Colonic mucosa (tissue), 4 donors: ENCODE measurements at regions of chr2 and their contacts with region 1.

Region 1: DNA sequence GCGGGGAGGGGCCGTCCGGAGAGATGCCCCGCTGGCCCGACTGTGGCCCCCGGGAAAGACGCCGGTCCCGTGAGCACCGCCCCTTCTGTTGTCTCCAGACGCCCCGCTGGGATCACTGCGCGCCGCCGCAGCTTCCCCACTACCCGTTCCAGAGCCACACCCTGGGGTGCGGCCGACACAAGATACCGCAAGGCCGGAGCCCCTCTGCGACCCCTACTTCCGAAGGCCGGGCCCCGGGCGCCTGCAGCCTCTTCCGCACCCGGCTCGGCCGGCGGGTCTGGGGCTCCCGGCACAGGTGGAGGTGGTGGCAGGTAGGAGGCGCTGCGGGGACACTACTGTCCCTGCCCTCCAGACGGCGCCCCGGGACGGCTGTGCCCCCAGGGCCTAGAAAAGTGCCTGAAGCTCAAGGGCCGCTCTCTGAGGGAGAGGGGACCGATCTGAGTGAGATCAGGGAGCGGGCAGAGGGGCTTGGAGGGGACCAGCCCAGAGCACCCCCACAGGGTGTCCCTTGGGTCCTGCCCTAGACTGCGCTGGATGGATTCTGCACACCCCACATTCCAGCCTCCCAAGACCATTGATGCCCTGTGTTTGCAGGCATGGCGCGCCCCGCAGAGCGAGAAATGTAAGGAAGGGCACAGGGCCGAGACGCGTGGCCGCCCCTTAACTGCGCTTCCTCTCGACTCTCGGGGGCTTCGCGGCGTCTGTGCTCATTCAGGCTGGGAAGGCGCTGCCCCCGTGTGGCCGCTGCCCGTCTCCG is 80.0 kb downstream of the GFPT1 start:
- DNase-seq: peak; percentile 86
- H3K4me3 ChIP-seq: peak overlapping the region; percentile 63
- H3K27ac ChIP-seq: peak overlapping the region; percentile 50
- H3K4me1 ChIP-seq: peaks cover 12% of the 10 kb centered on the region
- H3K27me3 ChIP-seq: no peaks in the 10 kb centered on the region
- CTCF ChIP-seq: peak; percentile 47

Region 2: DNA sequence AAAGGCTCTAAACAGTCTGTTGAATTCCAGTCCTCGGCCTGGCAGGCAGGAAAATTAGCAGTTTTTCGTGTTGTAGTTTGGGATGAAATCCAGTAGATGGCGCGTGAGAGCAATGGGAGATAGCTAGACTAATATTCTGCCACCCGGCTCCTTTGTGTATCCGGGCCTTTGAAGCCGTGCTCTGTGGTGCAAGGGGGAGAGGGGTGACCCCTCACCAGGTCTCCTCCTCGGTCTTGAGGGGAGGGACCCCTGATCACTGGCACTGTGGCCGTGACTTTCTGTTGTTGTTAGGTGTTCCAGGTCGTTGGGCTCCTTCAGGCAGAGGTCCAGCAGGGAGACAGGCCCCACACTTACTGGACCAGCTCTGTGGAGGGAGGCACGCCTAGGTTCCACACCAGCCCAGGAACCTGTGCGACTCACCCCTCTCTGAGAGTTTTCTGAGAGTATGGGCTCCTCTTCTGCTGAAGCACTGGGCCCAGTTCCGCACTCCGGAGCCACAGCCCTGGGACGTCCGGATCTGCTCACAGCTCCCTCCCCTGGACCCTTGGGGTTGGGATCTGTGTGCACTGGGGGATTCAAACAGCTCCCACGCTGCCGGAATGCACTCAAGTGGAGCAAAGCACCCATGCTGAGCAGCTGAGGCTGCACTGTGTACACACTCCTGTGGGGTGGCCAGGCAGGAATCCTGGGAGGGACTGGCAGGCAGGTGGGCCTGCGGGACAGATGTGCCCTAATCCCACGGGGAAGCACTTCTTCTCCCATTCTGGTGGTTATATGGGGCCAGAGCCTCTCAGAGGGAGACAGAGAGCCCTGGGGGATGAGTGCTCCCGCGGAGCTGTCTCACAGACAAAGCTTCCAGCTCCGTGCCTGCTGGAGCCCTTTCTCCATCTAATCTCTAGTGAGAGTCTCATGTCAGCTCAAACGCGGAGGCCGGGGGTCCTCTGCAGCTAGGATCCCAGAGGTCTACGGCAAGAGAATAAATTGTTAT is 363.1 kb before region 1 on chr2:
- intact Hi-C with region 1: loop called (anchors 10 kb)
- DNase-seq: peak; percentile 65
- H3K4me3 ChIP-seq: no peak overlapping the region
- H3K27ac ChIP-seq: no peak overlapping the region
- H3K4me1 ChIP-seq: no peaks in the 10 kb centered on the region
- H3K27me3 ChIP-seq: no peaks in the 10 kb centered on the region
- CTCF ChIP-seq: peak; percentile 75

Region 3: GRCh38 chr2:69012310-69013141 is 294.5 kb before region 1 on chr2:
- intact Hi-C with region 1: loop called (anchors 5 kb)
- DNase-seq: peak; percentile 72
- H3K4me3 ChIP-seq: peak overlapping the region; percentile 55
- H3K27ac ChIP-seq: no peak overlapping the region
- H3K4me1 ChIP-seq: peaks cover 4% of the 10 kb centered on the region
- H3K27me3 ChIP-seq: peaks cover 22% of the 10 kb centered on the region
- CTCF ChIP-seq: peak; percentile 51

Region 4: DNA sequence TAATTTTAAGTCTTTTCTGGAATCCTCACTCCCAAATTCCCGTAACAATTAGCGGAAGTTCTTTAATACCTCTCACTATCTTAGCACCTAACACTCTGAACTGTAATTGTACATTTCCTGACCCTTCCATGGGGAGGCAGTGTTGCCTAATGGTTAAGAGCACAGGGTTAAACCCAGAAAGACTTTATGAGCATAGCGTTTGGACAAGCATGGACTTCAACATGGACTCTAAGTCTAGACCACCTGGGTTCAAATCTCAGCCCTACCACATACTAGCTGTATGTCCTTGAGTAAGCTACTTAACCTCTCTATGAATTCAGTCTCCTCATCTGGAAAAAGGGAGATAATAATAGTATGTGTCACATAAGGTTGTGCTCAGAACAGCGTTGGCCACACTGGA is 281.0 kb before region 1 on chr2:
- intact Hi-C with region 1: loop called (anchors 5 kb)
- DNase-seq: peak; percentile 68
- H3K4me3 ChIP-seq: no peak overlapping the region
- H3K27ac ChIP-seq: no peak overlapping the region
- H3K4me1 ChIP-seq: no peaks in the 10 kb centered on the region
- H3K27me3 ChIP-seq: no peaks in the 10 kb centered on the region
- CTCF ChIP-seq: peak; percentile 36

Region 5: DNA sequence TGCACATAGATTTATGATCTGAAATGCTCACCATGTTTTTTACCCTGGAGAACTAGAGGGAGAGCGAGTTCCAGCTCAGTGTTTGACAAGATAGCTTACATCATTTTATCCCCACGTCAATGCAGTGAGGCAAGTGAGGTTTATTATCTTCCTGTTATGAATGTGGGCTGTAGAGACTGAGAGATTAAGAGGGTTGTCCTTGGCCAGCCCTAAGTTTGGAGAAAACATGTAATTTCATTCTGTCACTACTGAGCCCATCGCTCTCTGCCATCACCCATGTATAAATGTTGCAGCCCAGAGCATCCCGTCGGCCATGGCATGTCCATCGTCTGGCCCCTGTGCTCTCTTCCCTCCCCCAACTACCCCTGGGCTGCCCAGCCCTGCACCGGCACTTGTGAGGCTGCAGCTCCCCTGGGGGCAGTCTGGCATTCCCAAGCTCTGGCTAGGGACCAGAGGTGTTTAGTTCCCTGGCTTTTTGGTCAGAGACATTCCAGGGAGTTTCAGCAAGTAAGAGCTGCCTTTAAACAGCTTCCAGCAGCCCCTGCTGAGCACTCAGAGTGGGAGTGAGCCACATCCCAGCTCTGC is 157.3 kb before region 1 on chr2:
- intact Hi-C with region 1: loop called (anchors 10 kb)
- DNase-seq: no peak
- H3K4me3 ChIP-seq: no peak overlapping the region
- H3K27ac ChIP-seq: no peak overlapping the region
- H3K4me1 ChIP-seq: no peaks in the 10 kb centered on the region
- H3K27me3 ChIP-seq: no peaks in the 10 kb centered on the region
- CTCF ChIP-seq: no peak